Transverse colon (tissue), 4 donors: ENCODE measurements at regions of chr16 and their contacts with region 1.

Region 1: GRCh38 chr16:58620396-58620795 is 9.2 kb downstream of the CNOT1 start:
- DNase-seq: no peak
- H3K4me3 ChIP-seq: no peak overlapping the region
- H3K27ac ChIP-seq: no peak overlapping the region
- H3K4me1 ChIP-seq: peaks cover 0 to 1% (median 0%) of the 10 kb centered on the region in 4 donors
- H3K27me3 ChIP-seq: no peaks in the 10 kb centered on the region
- CTCF ChIP-seq: no peak
- EP300 ChIP-seq: no peak
- POLR2A ChIP-seq: no peak

Region 2: GRCh38 chr16:57955572-57956188 is 664.7 kb before region 1 on chr16:
- in situ Hi-C with region 1: no loop called
- intact Hi-C with region 1: no loop called
- DNase-seq: no peak
- H3K4me3 ChIP-seq: no peak overlapping the region
- H3K27ac ChIP-seq: no peak overlapping the region
- H3K4me1 ChIP-seq: no peaks in the 10 kb centered on the region
- H3K27me3 ChIP-seq: no peaks in the 10 kb centered on the region
- CTCF ChIP-seq: no peak
- EP300 ChIP-seq: no peak
- POLR2A ChIP-seq: no peak

Region 3: DNA sequence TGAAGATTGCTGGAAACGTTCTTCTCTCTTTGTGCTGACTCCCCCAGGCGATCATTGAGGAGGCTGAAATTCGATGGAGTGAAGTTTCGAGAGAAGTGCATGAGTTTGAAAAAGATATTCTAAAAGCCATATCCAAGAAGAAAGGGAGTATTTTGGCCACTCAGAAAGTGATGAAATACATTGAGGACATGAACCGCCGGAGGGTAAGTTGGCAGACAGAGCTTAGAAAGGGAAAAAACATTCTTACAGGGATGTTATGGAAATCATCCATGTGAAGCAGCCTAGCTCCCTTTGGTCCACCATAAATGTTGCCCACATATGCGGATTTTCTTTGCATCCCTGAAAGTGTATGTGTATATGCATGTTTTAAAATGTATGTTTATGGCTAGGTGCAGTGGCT is 362.1 kb before region 1 on chr16:
- in situ Hi-C with region 1: no loop called
- intact Hi-C with region 1: no loop called
- DNase-seq: no peak
- H3K4me3 ChIP-seq: no peak overlapping the region
- H3K27ac ChIP-seq: no peak overlapping the region
- H3K4me1 ChIP-seq: no peaks in the 10 kb centered on the region
- H3K27me3 ChIP-seq: no peaks in the 10 kb centered on the region
- CTCF ChIP-seq: no peak
- EP300 ChIP-seq: no peak
- POLR2A ChIP-seq: no peak

Region 4: DNA sequence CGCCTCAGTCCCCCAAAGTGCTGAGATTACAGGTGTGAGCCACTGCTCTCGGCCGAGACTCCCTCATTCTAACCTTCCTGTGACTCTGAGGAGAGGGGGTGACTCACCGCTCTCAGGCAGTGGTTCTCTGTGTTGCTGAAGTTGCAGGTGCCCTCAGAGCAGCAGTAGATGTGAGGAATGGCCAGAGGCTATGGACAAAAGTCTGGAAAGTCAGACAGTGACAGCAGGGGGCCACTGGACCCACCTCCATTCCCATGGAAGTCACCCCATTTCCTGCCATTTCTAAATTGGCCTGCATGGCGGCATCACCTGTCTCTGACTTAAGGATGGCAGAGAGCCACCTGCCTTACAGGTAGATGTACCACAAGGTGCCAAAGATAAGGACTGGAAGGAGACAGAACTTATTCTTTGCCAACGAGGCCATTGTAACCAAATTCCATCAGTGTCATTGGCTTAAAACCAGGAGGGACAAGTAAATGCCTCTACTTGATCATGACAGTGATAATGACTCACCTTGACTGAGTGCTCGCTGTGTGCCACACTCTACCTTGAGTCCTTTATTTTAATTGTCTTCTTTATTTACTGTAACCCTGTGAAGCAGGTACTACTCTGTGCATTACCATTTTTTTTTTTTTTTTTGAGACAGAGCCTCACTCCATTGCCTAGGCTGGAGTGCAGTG is 24.5 kb after region 1 on chr16:
- in situ Hi-C with region 1: no loop called
- intact Hi-C with region 1: no loop called
- DNase-seq: no peak
- H3K4me3 ChIP-seq: no peak overlapping the region
- H3K27ac ChIP-seq: no peak overlapping the region
- H3K4me1 ChIP-seq: peaks cover 0 to 5% (median 0%) of the 10 kb centered on the region in 4 donors
- H3K27me3 ChIP-seq: no peaks in the 10 kb centered on the region
- CTCF ChIP-seq: no peak
- EP300 ChIP-seq: no peak
- POLR2A ChIP-seq: no peak

Region 5: GRCh38 chr16:58716468-58716867 is 96.1 kb after region 1 on chr16:
- in situ Hi-C with region 1: no loop called
- intact Hi-C with region 1: no loop called
- DNase-seq: no peak
- H3K4me3 ChIP-seq: no peak overlapping the region
- H3K27ac ChIP-seq: no peak overlapping the region
- H3K4me1 ChIP-seq: no peaks in the 10 kb centered on the region
- H3K27me3 ChIP-seq: no peaks in the 10 kb centered on the region
- CTCF ChIP-seq: no peak
- EP300 ChIP-seq: no peak
- POLR2A ChIP-seq: no peak

Region 6: GRCh38 chr16:58931436-58931835 is 311.0 kb after region 1 on chr16:
- in situ Hi-C with region 1: no loop called
- intact Hi-C with region 1: loop called (anchors 5 kb)
- DNase-seq: no peak
- H3K4me3 ChIP-seq: no peak overlapping the region
- H3K27ac ChIP-seq: no peak overlapping the region
- H3K4me1 ChIP-seq: no peaks in the 10 kb centered on the region
- H3K27me3 ChIP-seq: no peaks in the 10 kb centered on the region
- CTCF ChIP-seq: no peak
- EP300 ChIP-seq: no peak
- POLR2A ChIP-seq: no peak